ENCODE measurements at regions of chr12 and their contacts with region 1.

Region 1: GRCh38 chr12:93378373-93379325 is 924 bp downstream of the NUDT4 start:
- DNase-seq: peak; percentile 57
- ATAC-seq: peak; percentile 40
- H3K4me3 Mint-ChIP-seq: peak overlapping the region; percentile 100
- H3K27ac Mint-ChIP-seq: peak overlapping the region; percentile 100
- H3K4me1 Mint-ChIP-seq: peaks cover 41% of the 10 kb centered on the region
- H3K27me3 Mint-ChIP-seq: no peaks in the 10 kb centered on the region
- CTCF ChIP-seq: no peak

Region 2: GRCh38 chr12:92943482-92944250 is 435.0 kb before region 1 on chr12:
- CTCF ChIA-PET with region 1: no interaction called
- POLR2A ChIA-PET with region 1: no interaction called
- intact Hi-C with region 1: loop called (anchors 1 kb)
- DNase-seq: no peak
- ATAC-seq: no peak
- H3K4me3 Mint-ChIP-seq: no peak overlapping the region
- H3K27ac Mint-ChIP-seq: peak overlapping the region; percentile 46
- H3K4me1 Mint-ChIP-seq: peaks cover 36% of the 10 kb centered on the region
- H3K27me3 Mint-ChIP-seq: no peaks in the 10 kb centered on the region
- CTCF ChIP-seq: no peak

Region 3: DNA sequence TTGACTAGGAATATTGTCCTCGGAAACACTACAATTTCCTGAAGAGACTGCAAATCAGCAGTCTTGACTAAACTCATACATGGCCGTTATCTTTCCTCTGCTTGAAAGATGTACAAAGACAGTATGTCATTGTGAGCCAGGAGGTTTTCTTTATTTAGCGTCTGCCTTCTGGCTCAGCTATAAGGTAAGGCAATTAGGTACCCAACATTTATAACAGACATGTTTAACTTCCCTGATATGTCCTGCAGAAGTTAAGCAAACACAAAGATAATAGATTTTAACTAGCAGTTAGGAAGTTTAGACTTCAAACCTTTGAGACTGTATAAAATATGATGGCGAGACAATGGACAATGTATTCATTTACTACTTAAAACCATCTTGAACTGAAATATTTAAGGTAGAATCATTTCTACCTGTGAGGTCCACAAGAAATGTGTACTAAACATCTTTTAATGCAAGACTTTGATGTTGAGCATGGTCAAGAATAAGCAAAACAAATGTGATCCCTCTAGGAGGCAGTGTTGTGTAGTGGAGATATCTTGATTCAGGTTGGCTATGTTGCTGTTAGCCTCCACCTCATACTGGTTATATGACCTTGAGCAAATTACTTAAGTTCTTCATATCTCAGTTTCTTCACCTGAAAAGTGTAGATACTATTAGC is 353.4 kb before region 1 on chr12:
- CTCF ChIA-PET with region 1: interaction called, 4 read pairs
- POLR2A ChIA-PET with region 1: no interaction called
- intact Hi-C with region 1: loop called (anchors 1 kb)
- DNase-seq: no peak
- ATAC-seq: no peak
- H3K4me3 Mint-ChIP-seq: no peak overlapping the region
- H3K27ac Mint-ChIP-seq: no peak overlapping the region
- H3K4me1 Mint-ChIP-seq: no peaks in the 10 kb centered on the region
- H3K27me3 Mint-ChIP-seq: no peaks in the 10 kb centered on the region
- CTCF ChIP-seq: no peak

Region 4: DNA sequence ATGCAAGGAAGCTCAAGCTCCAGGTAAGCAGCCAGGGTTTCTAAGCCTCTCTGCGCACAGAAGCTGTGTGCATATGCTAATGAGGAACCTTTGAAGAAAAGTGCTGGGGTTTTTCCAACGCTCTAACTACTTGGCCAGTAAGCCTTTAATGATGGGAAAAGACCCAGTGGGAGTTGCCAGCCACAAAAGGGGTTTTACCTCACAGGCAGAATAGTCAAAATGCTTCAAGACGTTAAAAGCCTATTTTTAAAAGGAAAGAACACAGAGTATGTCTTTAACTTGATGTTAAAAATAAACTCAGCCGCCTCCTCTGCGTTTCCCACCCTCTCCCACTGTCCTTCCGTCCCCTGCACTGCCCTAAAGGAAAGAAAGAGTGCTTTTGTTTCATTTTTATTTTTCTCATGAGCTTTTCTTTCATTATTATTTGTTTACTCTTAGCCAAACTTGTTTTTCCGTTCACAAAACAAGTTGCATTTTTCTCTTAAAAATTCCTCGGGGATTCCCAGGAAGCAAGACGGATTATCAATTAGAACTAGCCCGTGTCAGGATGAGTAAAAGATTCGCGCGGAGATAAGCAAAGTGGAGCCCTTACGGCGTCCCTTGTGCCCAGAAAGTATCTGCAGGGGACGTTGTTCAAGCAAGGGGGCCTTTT is 210.7 kb before region 1 on chr12:
- CTCF ChIA-PET with region 1: no interaction called
- POLR2A ChIA-PET with region 1: no interaction called
- intact Hi-C with region 1: loop called (anchors 1 kb)
- DNase-seq: no peak
- ATAC-seq: peak; percentile 80
- H3K4me3 Mint-ChIP-seq: peak overlapping the region; percentile 80
- H3K27ac Mint-ChIP-seq: peak overlapping the region; percentile 80
- H3K4me1 Mint-ChIP-seq: peaks cover 60% of the 10 kb centered on the region
- H3K27me3 Mint-ChIP-seq: no peaks in the 10 kb centered on the region
- CTCF ChIP-seq: no peak

Region 5: DNA sequence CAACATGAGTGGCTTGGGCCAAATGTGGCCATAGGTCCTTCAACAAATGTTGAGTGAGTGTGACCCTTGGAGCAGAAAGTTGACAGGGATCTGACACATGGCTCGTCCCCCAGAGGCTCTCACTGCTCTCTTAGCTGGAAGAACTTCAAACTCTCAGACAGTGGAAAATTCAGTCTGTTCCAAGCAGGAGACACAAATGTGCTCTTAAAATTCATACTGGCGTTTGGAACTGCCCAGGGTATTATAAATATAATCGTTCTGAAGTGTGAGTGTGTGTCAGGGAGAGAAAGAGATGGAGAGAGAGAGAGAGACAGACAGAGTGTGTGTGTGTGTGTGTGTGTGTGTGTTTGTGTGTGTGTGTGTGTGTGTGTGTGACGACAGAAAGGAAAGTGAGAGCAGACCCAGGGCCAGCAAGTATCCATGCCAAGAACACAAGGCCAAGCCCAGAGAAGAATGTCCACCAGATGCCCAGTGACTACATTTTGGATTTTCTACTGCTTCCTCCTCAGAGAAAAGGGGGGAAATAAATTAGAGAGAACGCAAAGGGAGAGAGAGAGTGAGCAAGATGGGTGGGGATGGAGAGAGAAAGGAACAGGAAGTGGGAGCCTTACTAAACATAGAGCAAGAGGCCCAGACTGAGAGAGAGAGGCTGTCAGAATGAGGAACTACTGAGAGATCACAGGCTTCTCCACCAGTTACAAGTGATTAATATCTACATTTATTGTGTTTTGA is 194.5 kb before region 1 on chr12:
- CTCF ChIA-PET with region 1: no interaction called
- POLR2A ChIA-PET with region 1: interaction called, 4 read pairs
- intact Hi-C with region 1: loop called (anchors 5 kb)
- DNase-seq: no peak
- ATAC-seq: peak; percentile 94
- H3K4me3 Mint-ChIP-seq: peak overlapping the region; percentile 40
- H3K27ac Mint-ChIP-seq: peak overlapping the region; percentile 86
- H3K4me1 Mint-ChIP-seq: peaks cover 50% of the 10 kb centered on the region
- H3K27me3 Mint-ChIP-seq: no peaks in the 10 kb centered on the region
- CTCF ChIP-seq: no peak

Region 6: GRCh38 chr12:93325855-93326254 is 52.8 kb before region 1 on chr12:
- CTCF ChIA-PET with region 1: no interaction called
- POLR2A ChIA-PET with region 1: no interaction called
- intact Hi-C with region 1: no loop called
- DNase-seq: no peak
- ATAC-seq: no peak
- H3K4me3 Mint-ChIP-seq: no peak overlapping the region
- H3K27ac Mint-ChIP-seq: no peak overlapping the region
- H3K4me1 Mint-ChIP-seq: no peaks in the 10 kb centered on the region
- H3K27me3 Mint-ChIP-seq: no peaks in the 10 kb centered on the region
- CTCF ChIP-seq: no peak

Region 7: GRCh38 chr12:93441617-93442410 is 63.2 kb after region 1 on chr12 and contains the start of gene UBE2N:
- CTCF ChIA-PET with region 1: interaction called, 3 read pairs
- POLR2A ChIA-PET with region 1: no interaction called
- intact Hi-C with region 1: loop called (anchors 1 kb)
- DNase-seq: peak; percentile 99
- ATAC-seq: peak; percentile 84
- H3K4me3 Mint-ChIP-seq: peak within 1 kb of the TSS; percentile 96
- H3K27ac Mint-ChIP-seq: peak within 1 kb of the TSS; percentile 96
- H3K4me1 Mint-ChIP-seq: peaks cover 56% of the 10 kb centered on the region
- H3K27me3 Mint-ChIP-seq: no peaks in the 10 kb centered on the region
- CTCF ChIP-seq: no peak
- total RNA-seq, gene UBE2N: 152 and 163 TPM in 2 replicates

Region 8: GRCh38 chr12:93467351-93468007 is 88.8 kb after region 1 on chr12 and contains the start of gene MRPL42:
- CTCF ChIA-PET with region 1: no interaction called
- POLR2A ChIA-PET with region 1: no interaction called
- intact Hi-C with region 1: loop called (anchors 1 kb)
- DNase-seq: peak; percentile 93
- ATAC-seq: peak; percentile 92
- H3K4me3 Mint-ChIP-seq: peak within 1 kb of the TSS; percentile 95
- H3K27ac Mint-ChIP-seq: peak within 1 kb of the TSS; percentile 94
- H3K4me1 Mint-ChIP-seq: peaks cover 23% of the 10 kb centered on the region
- H3K27me3 Mint-ChIP-seq: no peaks in the 10 kb centered on the region
- CTCF ChIP-seq: no peak
- total RNA-seq, gene MRPL42: 40.9 and 44.6 TPM in 2 replicates

Measured in activated B cell treated with CpG ODN at 0.5 μM for 24 hours (primary cell).